BJ (cell line): ENCODE measurements at regions of chr6 and their contacts with region 1.

Region 1: GRCh38 chr6:100880149-100880852 is 828 bp downstream of the ASCC3 start:
- DNase-seq: no peak
- H3K4me3 ChIP-seq: peak overlapping the region; percentile 73
- H3K27me3 ChIP-seq: no peaks in the 10 kb centered on the region
- CTCF ChIP-seq: no peak

Region 2: GRCh38 chr6:100435299-100435698 is 445.0 kb before region 1 on chr6:
- CTCF ChIA-PET with region 1: no interaction called
- POLR2A ChIA-PET with region 1: no interaction called
- DNase-seq: no peak
- H3K4me3 ChIP-seq: no peak overlapping the region
- H3K27me3 ChIP-seq: no peaks in the 10 kb centered on the region
- CTCF ChIP-seq: no peak

Region 3: DNA sequence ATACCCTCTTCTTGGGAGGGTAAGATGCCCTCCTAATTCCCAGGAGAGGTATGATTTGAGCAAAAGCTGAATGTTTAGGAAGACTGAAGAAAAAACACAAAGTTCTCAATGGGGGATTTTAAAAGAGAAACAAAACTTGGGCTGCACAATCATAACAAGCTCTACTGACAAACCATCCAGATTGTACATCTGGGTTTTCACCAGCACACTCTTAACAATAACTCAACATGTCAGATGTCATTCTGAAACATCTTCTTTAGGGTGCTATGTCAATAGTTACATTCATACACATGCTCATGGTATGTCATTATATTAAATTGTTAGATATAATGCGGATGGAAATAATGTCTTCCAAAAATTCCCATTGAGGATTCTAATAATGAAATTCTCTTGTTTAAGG is 94.3 kb before region 1 on chr6:
- CTCF ChIA-PET with region 1: no interaction called
- POLR2A ChIA-PET with region 1: no interaction called
- DNase-seq: no peak
- H3K4me3 ChIP-seq: no peak overlapping the region
- H3K27me3 ChIP-seq: no peaks in the 10 kb centered on the region
- CTCF ChIP-seq: no peak

Region 4: GRCh38 chr6:100891079-100891478 is 10.8 kb after region 1 on chr6:
- CTCF ChIA-PET with region 1: interaction called, 5 read pairs
- POLR2A ChIA-PET with region 1: interaction called, 10 read pairs
- DNase-seq: no peak
- H3K4me3 ChIP-seq: no peak overlapping the region
- H3K27me3 ChIP-seq: no peaks in the 10 kb centered on the region
- CTCF ChIP-seq: no peak